ENCODE measurements at regions of chr3 and their contacts with region 1.

Region 1: DNA sequence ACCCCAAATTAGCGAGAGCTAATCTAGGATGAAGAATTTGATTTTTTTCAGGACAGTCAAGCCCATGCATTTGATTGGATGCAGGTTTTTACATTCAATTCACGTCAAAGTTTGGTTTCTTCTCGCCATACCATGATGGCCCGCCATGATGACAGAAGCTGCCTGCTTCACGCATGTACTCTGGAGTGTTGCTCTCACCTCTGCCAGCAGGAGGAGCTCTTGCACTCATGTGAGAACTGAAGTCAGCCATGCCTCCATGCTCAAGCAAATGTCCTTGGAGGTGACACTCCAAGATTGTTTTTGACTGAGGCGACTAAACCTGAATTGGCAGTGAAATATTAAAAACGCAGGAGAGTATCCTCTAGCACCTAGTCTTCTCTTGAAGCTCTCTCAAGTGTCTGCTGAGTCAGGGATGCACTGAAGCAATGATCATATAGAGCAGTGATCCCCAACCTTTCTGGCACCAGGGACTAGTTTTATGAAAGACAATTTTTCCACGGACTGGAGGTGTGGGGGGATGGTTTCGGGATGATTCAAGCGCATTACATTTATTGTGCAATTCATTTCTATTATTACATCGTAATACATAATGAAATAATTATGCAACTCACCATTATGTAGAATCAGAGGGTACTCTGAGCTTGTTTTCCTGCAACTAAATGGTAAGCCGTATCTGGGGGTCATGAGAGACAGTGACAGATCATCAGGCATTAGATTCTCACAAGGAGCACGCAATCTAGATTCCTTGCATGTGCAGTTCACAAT is 121.0 kb downstream of the SAMMSON start:
- DNase-seq: peak; percentile 84
- ATAC-seq: peak; percentile 76
- H3K4me3 ChIP-seq: peak overlapping the region; percentile 35; the same call in 1 of the 2 replicates
- H3K27ac ChIP-seq: no peak overlapping the region
- H3K4me1 ChIP-seq: no peaks in the 10 kb centered on the region
- H3K27me3 ChIP-seq: 0 out of 2 replicates have a peak, but pooled peaks cover 4% of the 10 kb centered on the region
- CTCF ChIP-seq: peak; percentile 76

Region 2: GRCh38 chr3:69948246-69948862 is 172.2 kb before region 1 on chr3:
- CTCF ChIA-PET with region 1: no interaction called
- POLR2A ChIA-PET with region 1: no interaction called
- intact Hi-C with region 1: no loop called
- DNase-seq: peak; percentile 35
- ATAC-seq: no peak
- H3K4me3 ChIP-seq: no peak overlapping the region
- H3K27ac ChIP-seq: no peak overlapping the region
- H3K4me1 ChIP-seq: no peaks in the 10 kb centered on the region
- H3K27me3 ChIP-seq: no peaks in the 10 kb centered on the region
- CTCF ChIP-seq: peak; percentile 51; the same call in 1 of the 2 replicates

Region 3: GRCh38 chr3:70249509-70250160 is 129.1 kb after region 1 on chr3:
- CTCF ChIA-PET with region 1: no interaction called
- POLR2A ChIA-PET with region 1: no interaction called
- intact Hi-C with region 1: loop called (anchors 5 kb)
- DNase-seq: peak; percentile 79
- ATAC-seq: peak; percentile 89
- H3K4me3 ChIP-seq: no peak overlapping the region
- H3K27ac ChIP-seq: peak overlapping the region; percentile 87
- H3K4me1 ChIP-seq: peaks cover 25% of the 10 kb centered on the region
- H3K27me3 ChIP-seq: no peaks in the 10 kb centered on the region
- CTCF ChIP-seq: no peak

Region 4: DNA sequence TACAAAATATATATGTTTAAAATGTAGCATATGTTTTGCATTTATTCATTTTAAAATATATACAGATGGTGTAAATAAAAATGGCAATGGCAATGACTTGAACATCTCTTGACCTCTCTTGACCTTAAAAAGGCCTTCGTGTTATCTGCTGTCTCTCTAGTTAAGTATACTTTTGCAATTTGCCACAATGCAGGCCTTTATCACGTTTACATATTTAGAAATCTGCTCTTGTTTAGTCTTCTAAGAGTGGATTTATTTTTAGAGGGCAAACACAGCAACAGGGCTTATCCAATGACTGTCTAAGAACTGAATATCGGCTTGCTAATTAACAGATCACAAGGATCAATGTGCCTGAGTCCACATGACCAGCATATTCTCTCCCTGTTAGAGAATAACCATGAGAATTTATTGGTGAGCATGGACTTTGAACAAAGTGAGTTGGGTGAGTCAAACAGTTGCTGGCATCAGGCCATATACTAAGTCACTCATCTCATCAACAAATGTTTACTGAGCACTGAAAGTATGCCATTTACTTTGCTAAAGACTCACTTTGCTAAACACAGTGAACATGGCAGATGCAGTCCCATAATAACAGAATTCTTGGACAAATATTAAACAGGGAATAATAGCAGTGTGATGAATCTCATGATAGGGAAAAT is 143.7 kb after region 1 on chr3:
- CTCF ChIA-PET with region 1: no interaction called
- POLR2A ChIA-PET with region 1: no interaction called
- intact Hi-C with region 1: loop called (anchors 5 kb)
- DNase-seq: peak; percentile 80
- ATAC-seq: peak; percentile 83
- H3K4me3 ChIP-seq: no peak overlapping the region
- H3K27ac ChIP-seq: peak overlapping the region; percentile 95
- H3K4me1 ChIP-seq: peaks cover 32% of the 10 kb centered on the region
- H3K27me3 ChIP-seq: no peaks in the 10 kb centered on the region
- CTCF ChIP-seq: no peak